ENCODE measurements at regions of chr12 and their contacts with region 1.

Region 1: GRCh38 chr12:110577717-110578521 is 5.2 kb downstream of the PPTC7 start:
- DNase-seq: peak; percentile 50
- H3K4me3 Mint-ChIP-seq: peak overlapping the region; percentile 98
- H3K27ac Mint-ChIP-seq: peak overlapping the region; percentile 96
- H3K4me1 Mint-ChIP-seq: peaks cover 63% of the 10 kb centered on the region
- H3K27me3 Mint-ChIP-seq: no peaks in the 10 kb centered on the region

Region 2: DNA sequence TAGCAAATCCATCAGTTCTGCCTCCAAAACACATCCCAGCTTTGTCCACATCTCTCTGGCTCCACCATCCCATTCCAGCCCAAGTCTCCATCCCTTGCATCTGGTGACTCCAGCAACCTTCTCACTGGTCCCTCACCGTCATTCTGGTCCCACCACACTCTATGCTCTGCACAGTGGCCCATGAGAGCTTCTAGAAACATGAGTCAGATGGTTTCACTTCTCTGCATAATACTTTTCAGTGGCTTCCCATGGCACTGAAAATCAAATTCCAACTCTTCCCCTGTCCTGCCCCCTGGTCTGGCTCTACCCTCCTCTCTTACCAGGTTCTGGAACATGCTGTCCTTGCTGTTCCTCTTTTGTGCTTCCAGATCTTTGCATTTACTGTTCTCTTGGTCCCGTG is 512.4 kb before region 1 on chr12:
- intact Hi-C with region 1: loop called (anchors 10 kb)
- DNase-seq: no peak
- H3K4me3 Mint-ChIP-seq: no peak overlapping the region
- H3K27ac Mint-ChIP-seq: peak overlapping the region; percentile 47
- H3K4me1 Mint-ChIP-seq: peaks cover 37% of the 10 kb centered on the region
- H3K27me3 Mint-ChIP-seq: no peaks in the 10 kb centered on the region

Region 3: GRCh38 chr12:110501752-110502738 is 75.9 kb before region 1 on chr12 and contains the starts of genes RAD9B and VPS29:
- intact Hi-C with region 1: loop called (anchors 2 kb)
- DNase-seq: peak; percentile 99
- H3K4me3 Mint-ChIP-seq: peak within 1 kb of the TSS; percentile 88
- H3K27ac Mint-ChIP-seq: peak within 1 kb of the TSS; percentile 91
- H3K4me1 Mint-ChIP-seq: peaks cover 24% of the 10 kb centered on the region
- H3K27me3 Mint-ChIP-seq: no peaks in the 10 kb centered on the region
- total RNA-seq, gene RAD9B: 0.28 and 0.41 TPM in 2 replicates
- total RNA-seq, gene VPS29: 103 and 107 TPM in 2 replicates

Region 4: DNA sequence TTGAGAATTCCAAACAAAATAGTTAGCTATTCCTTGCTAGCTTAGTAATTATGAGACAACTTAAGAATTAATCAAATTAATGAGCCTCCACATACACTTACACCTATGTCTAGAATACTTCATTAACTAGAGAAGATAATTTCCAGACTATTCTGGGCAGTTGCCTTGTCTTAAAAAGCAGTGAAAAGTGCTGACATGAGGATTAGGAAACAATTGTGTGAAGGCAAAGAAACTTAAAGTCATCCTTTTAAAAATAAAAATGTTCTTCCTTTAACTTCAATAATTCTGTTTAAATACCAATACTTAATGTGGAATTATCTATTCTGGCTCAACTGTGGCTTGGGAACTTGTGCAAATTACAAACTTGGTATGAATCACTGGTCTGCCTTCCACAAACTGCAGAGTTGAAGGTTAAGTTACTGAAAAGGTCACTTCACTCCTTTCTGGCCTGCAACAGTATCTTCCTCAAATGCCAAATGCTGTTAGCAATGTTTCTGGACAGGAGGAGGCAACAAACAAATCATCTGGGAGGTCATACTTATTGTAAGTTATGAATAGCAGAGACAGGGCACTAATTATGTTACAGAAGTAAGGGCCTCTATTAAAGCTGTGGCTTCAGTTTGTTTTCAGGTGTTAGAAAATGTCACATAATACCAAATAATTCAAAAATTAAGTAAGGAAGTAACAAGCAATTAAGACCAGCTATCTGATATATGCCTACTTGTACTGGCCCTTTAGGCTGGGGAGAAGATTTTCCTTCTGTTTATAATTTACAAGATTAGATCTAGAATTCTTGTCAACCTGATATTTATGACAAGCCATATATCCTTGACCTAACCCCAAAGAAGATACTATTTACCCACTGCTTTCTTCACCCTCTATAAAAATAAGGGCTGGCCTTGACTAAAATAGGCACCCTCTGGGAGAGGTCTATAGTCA is 13.9 kb before region 1 on chr12:
- intact Hi-C with region 1: loop called (anchors 1 kb)
- DNase-seq: no peak
- H3K4me3 Mint-ChIP-seq: peak overlapping the region; percentile 37
- H3K27ac Mint-ChIP-seq: peak overlapping the region; percentile 77
- H3K4me1 Mint-ChIP-seq: peaks cover 51% of the 10 kb centered on the region
- H3K27me3 Mint-ChIP-seq: no peaks in the 10 kb centered on the region

Region 5: GRCh38 chr12:110590806-110591326 is 12.9 kb after region 1 on chr12:
- intact Hi-C with region 1: loop called (anchors 1 kb)
- DNase-seq: peak; percentile 27
- H3K4me3 Mint-ChIP-seq: peak overlapping the region; percentile 14
- H3K27ac Mint-ChIP-seq: peak overlapping the region; percentile 84
- H3K4me1 Mint-ChIP-seq: peaks cover 20% of the 10 kb centered on the region
- H3K27me3 Mint-ChIP-seq: no peaks in the 10 kb centered on the region

Region 6: GRCh38 chr12:110619534-110619953 is 41.6 kb after region 1 on chr12:
- intact Hi-C with region 1: loop called (anchors 1 kb)
- DNase-seq: no peak
- H3K4me3 Mint-ChIP-seq: peak overlapping the region; percentile 30
- H3K27ac Mint-ChIP-seq: peak overlapping the region; percentile 64
- H3K4me1 Mint-ChIP-seq: peaks cover 12% of the 10 kb centered on the region
- H3K27me3 Mint-ChIP-seq: no peaks in the 10 kb centered on the region

Region 7: GRCh38 chr12:111434680-111435338 is 856.9 kb after region 1 on chr12:
- intact Hi-C with region 1: loop called (anchors 10 kb)
- DNase-seq: peak; percentile 80
- H3K4me3 Mint-ChIP-seq: peak overlapping the region; percentile 63
- H3K27ac Mint-ChIP-seq: peak overlapping the region; percentile 96
- H3K4me1 Mint-ChIP-seq: peaks cover 77% of the 10 kb centered on the region
- H3K27me3 Mint-ChIP-seq: no peaks in the 10 kb centered on the region